ENCODE measurements at regions of chr7 and their contacts with region 1.

Region 1: DNA sequence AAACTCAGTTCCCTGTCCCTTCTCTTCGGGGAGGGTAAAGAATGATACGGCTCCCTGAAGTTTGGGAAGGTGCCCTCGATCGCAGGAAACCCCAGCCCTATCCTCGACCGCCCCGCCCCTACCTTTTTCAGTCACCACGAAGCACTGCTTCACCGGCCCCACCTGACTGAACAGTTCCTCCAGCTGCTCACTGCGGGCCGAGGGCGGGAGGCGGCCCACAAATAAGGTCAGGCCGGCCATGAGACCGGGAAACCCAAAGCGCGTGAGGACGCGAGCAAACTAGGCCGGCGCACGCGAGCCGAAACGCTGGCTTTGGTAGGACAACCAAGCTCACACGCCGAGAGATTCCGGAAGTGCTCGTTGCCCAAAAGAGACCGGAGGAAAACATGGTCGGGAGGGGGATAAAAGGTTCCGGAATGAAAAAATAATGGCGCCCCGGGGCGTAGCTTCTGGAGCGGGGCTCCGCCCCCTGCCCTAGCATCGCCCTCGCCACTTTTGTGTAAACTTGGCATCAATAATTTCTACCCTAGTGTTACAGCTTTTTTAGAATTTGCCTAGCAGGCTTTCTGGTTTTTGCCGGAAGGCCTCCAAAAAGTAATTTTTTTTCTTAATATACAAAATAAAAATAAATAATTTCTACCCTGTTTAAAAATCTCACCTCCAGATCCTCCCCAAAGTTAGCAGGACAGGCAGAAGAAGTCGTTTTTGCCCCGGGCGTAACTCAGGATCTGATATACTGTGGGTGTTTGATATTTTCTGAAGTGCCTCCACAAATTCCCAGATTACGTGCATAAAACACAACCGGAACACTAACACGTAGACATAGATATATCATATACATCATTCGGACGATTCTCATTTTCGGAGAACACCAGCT is at the start of gene RBM28:
- DNase-seq: peak; percentile 78
- H3K4me3 ChIP-seq: peak within 1 kb of the TSS; percentile 87
- H3K27ac ChIP-seq: peak within 1 kb of the TSS; percentile 92
- H3K27me3 ChIP-seq: peaks cover 11% of the 10 kb centered on the region
- CTCF ChIP-seq: no peak
- polyA plus RNA-seq, gene RBM28: 18.8 and 19.0 TPM in 2 replicates

Region 2: GRCh38 chr7:128148676-128149075 is 195.1 kb before region 1 on chr7:
- CTCF ChIA-PET with region 1: no interaction called
- POLR2A ChIA-PET with region 1: no interaction called
- DNase-seq: no peak
- H3K4me3 ChIP-seq: no peak overlapping the region
- H3K27ac ChIP-seq: no peak overlapping the region
- H3K27me3 ChIP-seq: peaks cover 31% of the 10 kb centered on the region
- CTCF ChIP-seq: no peak

Region 3: DNA sequence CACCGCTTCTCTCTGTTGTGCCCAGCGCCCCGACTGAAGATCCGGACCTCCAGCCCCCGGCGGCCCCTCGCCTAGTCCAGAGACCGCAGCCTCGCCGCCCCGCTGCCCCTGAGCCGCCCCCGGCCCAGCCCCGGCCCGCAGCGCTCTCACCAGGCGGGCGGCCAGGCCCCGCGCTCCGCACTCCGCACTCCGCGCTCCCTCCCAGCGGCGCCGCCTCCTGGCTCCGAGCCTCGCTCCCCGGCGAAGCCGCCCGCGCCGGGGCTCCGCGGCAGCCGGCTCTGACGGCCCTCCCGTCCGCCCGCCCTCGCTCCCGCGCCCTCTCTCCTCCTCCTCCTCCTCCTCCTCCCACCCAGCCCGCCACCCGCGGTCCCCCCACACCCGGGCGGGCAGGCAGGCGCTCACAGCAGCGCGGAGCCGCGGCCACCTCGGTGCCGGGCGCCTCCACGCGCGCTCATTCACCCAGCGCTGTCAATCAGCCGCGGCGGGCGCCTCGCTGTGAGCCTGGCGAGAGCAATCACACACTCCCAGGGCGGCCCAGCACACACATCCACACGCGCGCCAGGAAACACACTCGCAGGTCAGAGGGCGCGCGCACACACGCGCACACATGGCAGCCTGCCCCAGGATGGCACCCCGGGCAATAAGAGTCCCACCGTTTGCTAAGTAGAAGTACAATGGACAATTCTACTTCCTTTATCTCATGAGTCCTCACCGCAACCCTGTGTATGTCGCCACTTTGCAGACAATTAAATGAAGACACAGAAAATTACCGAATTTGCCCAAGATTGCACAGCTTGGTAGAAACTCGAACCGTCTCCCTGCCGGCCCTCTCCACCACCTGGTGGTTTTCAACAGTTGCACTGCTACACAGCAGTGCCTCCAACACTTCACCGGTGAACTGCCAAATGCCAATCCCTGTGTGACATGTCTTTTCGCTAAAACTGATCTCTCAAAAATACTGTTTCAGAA is 17.9 kb after region 1 on chr7 and contains the start of gene PRRT4:
- CTCF ChIA-PET with region 1: interaction called, 34 read pairs
- POLR2A ChIA-PET with region 1: no interaction called
- DNase-seq: no peak
- H3K4me3 ChIP-seq: peak within 1 kb of the TSS; percentile 50
- H3K27ac ChIP-seq: no peak within 1 kb of the TSS
- H3K27me3 ChIP-seq: peaks cover 92% of the 10 kb centered on the region
- CTCF ChIP-seq: 0 out of 2 replicates have a peak, but pooled peaks have one; percentile 3
- polyA plus RNA-seq, gene PRRT4: not detected in 2 replicates

Region 4: GRCh38 chr7:128373606-128374005 is 29.8 kb after region 1 on chr7:
- CTCF ChIA-PET with region 1: interaction called, 474 read pairs
- POLR2A ChIA-PET with region 1: no interaction called
- DNase-seq: no peak
- H3K4me3 ChIP-seq: no peak overlapping the region
- H3K27ac ChIP-seq: no peak overlapping the region
- H3K27me3 ChIP-seq: peaks cover 9% of the 10 kb centered on the region
- CTCF ChIP-seq: no peak

Region 5: DNA sequence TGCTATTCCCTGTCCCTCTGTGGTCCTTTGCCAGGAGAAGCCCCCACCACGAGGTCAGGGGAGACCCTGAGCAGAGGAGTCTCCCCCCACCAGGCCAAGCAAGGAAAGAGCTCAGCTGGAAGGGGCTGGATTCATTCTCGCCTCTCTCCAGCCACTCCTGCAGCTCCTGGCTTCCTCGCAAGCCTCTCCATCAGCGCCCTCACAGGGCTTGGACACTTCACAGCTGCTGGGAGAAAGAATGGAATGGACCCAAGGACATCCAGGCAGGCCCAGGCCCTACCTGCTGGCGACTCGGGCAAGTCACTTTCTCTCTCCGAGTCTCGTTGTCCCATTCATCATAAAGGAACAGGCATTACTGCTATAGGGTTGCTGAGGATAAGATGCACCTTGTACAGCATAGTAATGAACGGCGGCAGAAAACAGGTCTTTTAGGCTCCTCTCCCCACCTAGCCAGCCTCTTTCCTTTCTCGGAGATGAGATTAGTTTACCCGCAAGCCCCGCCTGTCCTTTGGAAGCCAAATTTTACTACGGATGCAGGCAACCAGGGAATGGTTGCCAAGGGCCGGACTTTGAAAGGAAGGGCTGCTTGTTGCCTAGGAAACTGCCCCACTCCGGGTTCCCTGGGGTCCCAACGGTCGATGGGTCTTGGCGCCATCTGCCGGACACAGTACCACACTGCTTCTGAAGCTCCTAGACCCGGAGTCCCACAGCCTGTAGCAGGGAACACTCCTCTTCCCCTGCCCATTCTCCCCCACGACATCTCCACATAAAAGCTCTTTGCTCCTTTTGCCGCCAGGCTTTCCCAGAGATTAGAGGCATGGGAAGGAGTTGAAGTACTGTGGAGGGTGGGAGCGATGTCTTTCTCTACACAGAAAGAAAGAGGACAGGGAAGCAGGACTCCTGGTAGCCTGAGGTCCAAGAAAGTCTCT is 43.7 kb after region 1 on chr7:
- CTCF ChIA-PET with region 1: interaction called, 474 read pairs
- POLR2A ChIA-PET with region 1: interaction called, 11 read pairs
- DNase-seq: peak; percentile 24
- H3K4me3 ChIP-seq: no peak overlapping the region
- H3K27ac ChIP-seq: no peak overlapping the region
- H3K27me3 ChIP-seq: peaks cover 20% of the 10 kb centered on the region
- CTCF ChIP-seq: peak; percentile 88

Region 6: DNA sequence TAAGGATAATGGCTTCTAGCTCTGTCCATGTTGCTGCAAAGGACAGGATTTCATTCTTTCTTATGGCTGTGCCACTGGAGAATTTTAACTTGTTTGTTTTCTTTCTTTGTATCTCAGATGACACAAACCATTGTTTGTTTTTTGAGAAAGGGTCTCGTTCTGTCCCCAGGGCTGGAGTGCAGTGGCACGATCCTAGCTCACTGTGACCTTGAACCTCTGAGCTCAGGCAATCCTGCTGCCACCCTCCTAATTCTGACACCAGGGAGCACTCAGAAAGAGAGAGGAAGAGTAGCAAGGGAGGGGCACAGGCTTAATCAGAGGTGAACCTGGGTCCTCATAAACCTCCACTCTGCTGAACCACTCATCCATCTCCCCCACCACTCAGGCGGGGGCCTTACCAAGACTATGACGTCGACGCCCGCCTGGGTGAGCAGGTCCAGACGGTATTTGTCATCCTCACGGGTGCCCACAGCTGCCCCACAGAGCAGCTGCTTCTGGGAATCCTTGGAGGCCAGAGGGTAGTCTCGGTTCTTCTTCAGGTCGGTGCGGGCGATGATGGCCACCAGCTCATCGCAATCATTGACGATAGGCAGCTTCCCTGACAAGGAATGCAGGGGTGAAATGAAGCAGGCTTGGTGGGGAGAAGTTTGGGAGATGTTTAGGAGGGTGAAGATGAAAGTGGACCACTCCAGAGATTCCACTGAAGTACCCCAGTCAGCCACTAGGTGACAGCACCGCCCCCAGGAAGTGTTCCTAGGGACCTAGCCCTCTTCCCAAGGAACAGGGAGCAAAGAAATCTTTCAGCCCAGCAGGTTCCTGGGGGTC is 54.4 kb after region 1 on chr7:
- CTCF ChIA-PET with region 1: interaction called, 474 read pairs
- POLR2A ChIA-PET with region 1: no interaction called
- DNase-seq: no peak
- H3K4me3 ChIP-seq: no peak overlapping the region
- H3K27ac ChIP-seq: no peak overlapping the region
- H3K27me3 ChIP-seq: no peaks in the 10 kb centered on the region
- CTCF ChIP-seq: peak; percentile 96

Region 7: DNA sequence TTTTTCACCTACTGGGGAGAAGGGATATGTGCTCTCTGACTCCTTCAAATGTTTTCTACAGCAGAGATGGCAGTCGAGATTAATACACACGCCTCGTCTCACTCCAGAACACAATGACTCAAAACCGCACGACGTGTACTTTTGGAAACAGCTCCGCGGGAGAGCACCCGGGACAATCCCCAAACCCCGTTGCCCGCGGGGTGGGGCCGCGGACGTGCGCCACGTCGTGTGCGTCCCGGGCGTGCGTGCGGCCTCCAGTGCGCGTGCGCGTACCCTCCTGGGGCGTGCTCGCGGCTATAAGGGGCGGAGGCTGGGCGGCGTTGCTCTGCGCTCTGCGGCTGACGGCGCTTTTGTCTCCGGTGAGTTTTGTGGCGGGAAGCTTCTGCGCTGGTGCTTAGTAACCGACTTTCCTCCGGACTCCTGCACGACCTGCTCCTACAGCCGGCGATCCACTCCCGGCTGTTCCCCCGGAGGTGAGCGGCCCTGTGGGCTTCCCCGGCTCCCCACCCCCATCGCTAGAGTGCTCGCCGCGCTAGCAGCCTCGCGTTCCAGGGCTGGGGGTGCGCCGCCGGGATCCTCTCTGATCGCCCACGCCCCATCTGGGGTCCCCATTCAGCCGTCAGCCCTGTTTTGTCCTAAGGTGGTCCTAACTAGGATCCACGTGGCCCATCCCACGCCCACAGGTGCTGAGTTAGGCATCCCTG is 111.9 kb after region 1 on chr7 and contains the start of gene HILPDA:
- CTCF ChIA-PET with region 1: interaction called, 15 read pairs
- POLR2A ChIA-PET with region 1: no interaction called
- DNase-seq: peak; percentile 80
- H3K4me3 ChIP-seq: peak within 1 kb of the TSS; percentile 100
- H3K27ac ChIP-seq: peak within 1 kb of the TSS; percentile 97
- H3K27me3 ChIP-seq: peaks cover 4% of the 10 kb centered on the region
- CTCF ChIP-seq: peak; percentile 27; the same call in 1 of the 2 replicates
- polyA plus RNA-seq, gene HILPDA: 15.9 and 17.8 TPM in 2 replicates

Region 8: DNA sequence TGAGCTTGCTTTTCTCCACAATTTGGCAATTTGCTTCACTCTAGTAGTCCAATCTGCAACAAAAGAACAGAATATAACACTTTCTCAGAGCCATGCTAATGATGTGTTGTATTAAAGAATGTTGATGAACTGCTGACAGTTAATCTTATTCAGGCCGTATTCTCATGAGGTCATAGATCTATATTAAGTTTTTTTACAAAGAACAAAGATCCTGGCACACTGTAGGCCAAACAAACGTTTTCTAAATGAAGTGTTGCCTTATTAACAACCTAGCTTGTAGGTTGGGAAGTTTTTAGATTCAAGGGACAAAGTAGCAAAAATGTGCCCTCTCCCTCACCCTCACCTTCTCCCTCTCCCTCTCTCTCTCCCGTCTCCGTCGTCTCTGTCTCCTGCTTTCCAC is 118.7 kb after region 1 on chr7:
- CTCF ChIA-PET with region 1: interaction called, 15 read pairs
- POLR2A ChIA-PET with region 1: no interaction called
- DNase-seq: no peak
- H3K4me3 ChIP-seq: no peak overlapping the region
- H3K27ac ChIP-seq: no peak overlapping the region
- H3K27me3 ChIP-seq: no peaks in the 10 kb centered on the region
- CTCF ChIP-seq: no peak